Dendritic cell treated with granulocyte-macrophage colony-stimulating factor and Interleukin-4, amounts not matched to agents 40 ng/mL and 50 ng/mL, for 4 days (primary cell): ENCODE measurements at regions of chr2 and their contacts with region 1.

Region 1: DNA sequence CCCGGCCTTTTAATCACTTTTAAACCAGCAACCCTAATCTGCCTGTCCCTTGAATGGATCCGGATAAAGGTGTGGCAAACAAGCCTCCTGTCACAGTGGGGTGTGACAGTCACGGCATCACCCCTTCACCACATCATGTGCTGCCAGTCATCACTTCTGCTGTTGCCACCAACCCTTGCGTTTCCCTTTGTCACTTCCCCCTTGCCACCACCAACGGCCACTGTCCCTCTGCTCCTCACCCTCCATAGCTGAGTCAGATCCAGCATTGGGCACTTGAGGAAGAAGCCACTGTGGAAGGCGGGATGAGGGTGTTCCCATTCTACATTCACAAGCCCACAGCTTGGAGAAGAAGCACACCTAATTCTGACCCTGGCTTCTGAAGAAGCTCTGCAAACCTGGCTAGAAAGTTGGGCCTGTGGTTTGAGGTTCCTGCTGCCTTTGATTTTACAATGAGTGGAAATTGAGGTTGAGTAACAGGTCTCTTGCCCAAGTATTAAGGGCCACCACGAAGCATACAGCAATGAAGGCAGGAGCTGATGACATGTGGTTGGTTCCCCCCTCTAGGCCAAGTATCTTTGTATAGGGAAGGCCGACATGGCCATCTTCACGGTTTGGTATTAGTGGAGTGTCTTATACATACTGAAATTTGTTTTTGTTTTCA is 22.9 kb upstream of the DARS1 start:
- H3K4me3 Mint-ChIP-seq: peak overlapping the region; percentile 37
- H3K27ac Mint-ChIP-seq: peak overlapping the region; percentile 94
- H3K4me1 Mint-ChIP-seq: peaks cover 71% of the 10 kb centered on the region
- H3K27me3 Mint-ChIP-seq: no peaks in the 10 kb centered on the region

Region 2: GRCh38 chr2:134549104-134549503 is 1459.2 kb before region 1 on chr2:
- intact Hi-C with region 1: no loop called
- H3K4me3 Mint-ChIP-seq: no peak overlapping the region
- H3K27ac Mint-ChIP-seq: no peak overlapping the region
- H3K4me1 Mint-ChIP-seq: no peaks in the 10 kb centered on the region
- H3K27me3 Mint-ChIP-seq: no peaks in the 10 kb centered on the region

Region 3: DNA sequence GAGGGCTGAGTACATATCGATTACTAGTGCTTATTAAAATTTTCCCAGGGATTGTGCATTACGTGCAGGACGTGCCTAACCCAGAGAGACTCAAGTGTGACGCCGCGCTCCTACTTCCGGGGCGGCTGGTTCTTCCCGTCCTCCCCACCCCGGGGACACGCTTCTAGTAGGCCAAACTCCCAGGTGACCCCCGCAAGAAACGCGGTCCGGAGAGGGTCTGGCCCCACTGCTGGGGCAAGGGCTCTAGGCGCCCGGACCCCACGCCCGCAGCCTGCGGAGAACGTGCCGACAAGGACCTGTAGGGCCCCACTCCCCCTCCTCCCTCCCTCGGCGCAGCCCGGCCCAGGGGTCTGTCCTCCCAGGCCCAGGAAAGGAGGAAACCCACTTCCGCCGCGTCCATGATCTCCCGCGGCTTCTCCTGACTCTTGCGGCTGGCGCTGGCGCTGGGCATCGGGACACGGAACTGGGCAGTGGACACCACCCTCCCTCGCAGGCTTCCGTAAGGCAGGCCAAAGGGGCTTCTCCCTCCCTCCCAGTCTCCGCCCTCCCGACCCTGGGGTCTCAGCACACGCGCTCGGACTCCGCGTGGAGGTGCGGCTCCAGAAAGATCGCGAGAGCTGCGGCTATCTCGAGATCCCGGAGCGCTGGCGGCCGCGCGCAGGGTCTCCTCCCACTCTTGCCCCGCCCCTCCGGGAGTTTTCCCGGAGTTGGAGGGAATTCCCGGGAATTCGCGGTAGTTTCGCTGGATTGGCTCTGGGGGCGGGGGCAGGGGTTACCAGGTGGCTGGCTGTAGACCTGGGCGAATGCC is 23.1 kb before region 1 on chr2 and contains the start of gene DARS1:
- intact Hi-C with region 1: loop called (anchors 1 kb)
- H3K4me3 Mint-ChIP-seq: peak within 1 kb of the TSS; percentile 87
- H3K27ac Mint-ChIP-seq: peak within 1 kb of the TSS; percentile 99
- H3K4me1 Mint-ChIP-seq: peaks cover 27% of the 10 kb centered on the region
- H3K27me3 Mint-ChIP-seq: no peaks in the 10 kb centered on the region

Region 4: GRCh38 chr2:136255648-136256463 is 247.5 kb after region 1 on chr2:
- intact Hi-C with region 1: loop called (anchors 5 kb)
- H3K4me3 Mint-ChIP-seq: no peak overlapping the region
- H3K27ac Mint-ChIP-seq: peak overlapping the region; percentile 79
- H3K4me1 Mint-ChIP-seq: peaks cover 48% of the 10 kb centered on the region
- H3K27me3 Mint-ChIP-seq: no peaks in the 10 kb centered on the region

Region 5: GRCh38 chr2:136327162-136327852 is 319.0 kb after region 1 on chr2:
- intact Hi-C with region 1: loop called (anchors 10 kb)
- H3K4me3 Mint-ChIP-seq: no peak overlapping the region
- H3K27ac Mint-ChIP-seq: peak overlapping the region; percentile 90
- H3K4me1 Mint-ChIP-seq: peaks cover 81% of the 10 kb centered on the region
- H3K27me3 Mint-ChIP-seq: no peaks in the 10 kb centered on the region